Activated CD4-positive, alpha-beta T cell treated with anti-CD3 and anti-CD28 coated beads for 36 hours (primary cell): ENCODE measurements at regions of chr14 and their contacts with region 1.

Region 1: DNA sequence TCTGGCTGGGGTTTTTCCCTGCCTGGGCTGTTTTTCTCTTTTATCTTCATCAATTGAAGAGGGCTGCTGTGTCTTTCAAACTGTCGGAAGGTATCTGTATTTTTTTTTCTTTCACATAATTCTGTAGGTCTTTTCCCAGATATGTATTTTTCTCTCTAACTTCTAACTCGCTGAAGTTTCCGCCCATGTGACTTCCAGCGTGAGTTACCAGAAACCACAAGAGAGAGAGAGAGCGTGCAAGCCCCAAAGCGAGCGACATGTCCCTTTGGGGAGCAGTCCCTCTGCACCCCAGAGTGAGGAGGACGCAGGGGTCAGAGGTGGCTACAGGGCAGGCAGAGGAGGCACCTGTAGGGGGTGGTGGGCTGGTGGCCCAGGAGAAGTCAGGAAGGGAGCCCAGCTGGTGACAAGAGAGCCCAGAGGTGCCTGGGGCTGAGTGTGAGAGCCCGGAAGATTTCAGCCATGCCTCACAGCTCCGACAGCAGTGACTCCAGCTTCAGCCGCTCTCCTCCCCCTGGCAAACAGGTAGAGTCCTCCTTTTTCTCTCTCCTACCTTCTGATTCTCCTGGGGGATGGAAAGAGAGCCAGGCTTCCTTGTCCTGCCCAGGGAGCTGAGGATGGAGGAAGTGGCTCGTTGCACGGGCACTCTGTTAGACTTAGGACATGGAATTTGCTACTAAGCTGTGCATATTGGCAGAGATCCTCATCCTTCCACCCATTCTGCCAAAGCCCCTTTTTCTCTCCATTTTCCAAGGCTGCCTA is at the start of gene BATF:
- DNase-seq: peak; percentile 87
- ATAC-seq: peak; percentile 60
- H3K4me3 Mint-ChIP-seq: peak within 1 kb of the TSS; percentile 100
- H3K27ac Mint-ChIP-seq: peak within 1 kb of the TSS; percentile 100
- H3K4me1 Mint-ChIP-seq: peaks cover 68% of the 10 kb centered on the region
- H3K27me3 Mint-ChIP-seq: no peaks in the 10 kb centered on the region
- total RNA-seq, gene BATF: 165 to 187 TPM

Region 2: GRCh38 chr14:75249251-75249957 is 273.0 kb before region 1 on chr14:
- CTCF ChIA-PET with region 1: no interaction called
- POLR2A ChIA-PET with region 1: no interaction called
- intact Hi-C with region 1: loop called in 1 of 2 experiments (anchors 5 kb)
- DNase-seq: peak; percentile 91
- ATAC-seq: peak; percentile 81
- H3K4me3 Mint-ChIP-seq: peak overlapping the region; percentile 11
- H3K27ac Mint-ChIP-seq: peak overlapping the region; percentile 82
- H3K4me1 Mint-ChIP-seq: peaks cover 57% of the 10 kb centered on the region
- H3K27me3 Mint-ChIP-seq: peaks cover 2% of the 10 kb centered on the region

Region 3: DNA sequence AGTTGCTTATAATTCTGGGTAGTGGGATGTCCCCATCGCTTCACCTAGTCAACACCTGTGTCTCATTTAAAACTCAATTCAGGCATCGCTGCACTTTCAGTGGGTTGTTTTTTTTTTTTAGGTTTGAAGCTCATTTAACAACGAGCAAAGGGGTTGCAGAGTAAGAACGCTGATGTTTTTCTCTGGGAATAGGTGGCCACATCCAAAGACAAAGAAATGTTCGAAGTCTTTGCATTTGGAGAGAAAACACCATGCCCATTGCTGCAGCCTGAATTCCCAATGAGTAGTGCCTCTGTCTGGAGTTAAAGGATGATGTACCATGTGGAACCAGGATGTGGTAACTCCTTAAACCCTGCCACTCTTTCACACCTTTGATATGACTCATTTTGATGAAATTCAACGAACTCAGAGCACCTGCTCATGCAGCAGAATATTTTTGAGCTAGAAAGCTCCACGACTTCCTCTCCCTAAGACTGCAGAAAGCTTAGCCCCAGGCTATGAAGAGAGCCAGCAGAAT is 35.2 kb before region 1 on chr14:
- CTCF ChIA-PET with region 1: interaction called, 25 read pairs
- POLR2A ChIA-PET with region 1: no interaction called
- intact Hi-C with region 1: loop called in 1 of 2 experiments (anchors 2 kb)
- DNase-seq: peak; percentile 24
- ATAC-seq: peak; percentile 89
- H3K4me3 Mint-ChIP-seq: no peak overlapping the region
- H3K27ac Mint-ChIP-seq: no peak overlapping the region
- H3K4me1 Mint-ChIP-seq: peaks cover 32% of the 10 kb centered on the region
- H3K27me3 Mint-ChIP-seq: no peaks in the 10 kb centered on the region

Region 4: GRCh38 chr14:75506930-75507329 is 15.5 kb before region 1 on chr14:
- CTCF ChIA-PET with region 1: interaction called, 27 read pairs
- POLR2A ChIA-PET with region 1: no interaction called
- intact Hi-C with region 1: no loop called
- DNase-seq: no peak
- ATAC-seq: no peak
- H3K4me3 Mint-ChIP-seq: no peak overlapping the region
- H3K27ac Mint-ChIP-seq: no peak overlapping the region
- H3K4me1 Mint-ChIP-seq: peaks cover 23% of the 10 kb centered on the region
- H3K27me3 Mint-ChIP-seq: no peaks in the 10 kb centered on the region

Region 5: GRCh38 chr14:75542588-75543091 is 20.2 kb after region 1 on chr14:
- CTCF ChIA-PET with region 1: interaction called, 16 read pairs
- POLR2A ChIA-PET with region 1: interaction called, 35 read pairs
- intact Hi-C with region 1: loop called (anchors 1 kb)
- DNase-seq: peak; percentile 95
- ATAC-seq: peak; percentile 86
- H3K4me3 Mint-ChIP-seq: peak overlapping the region; percentile 59
- H3K27ac Mint-ChIP-seq: peak overlapping the region; percentile 98
- H3K4me1 Mint-ChIP-seq: peaks cover 85% of the 10 kb centered on the region
- H3K27me3 Mint-ChIP-seq: no peaks in the 10 kb centered on the region

Region 6: GRCh38 chr14:75566321-75566720 is 43.9 kb after region 1 on chr14:
- CTCF ChIA-PET with region 1: interaction called, 25 read pairs
- POLR2A ChIA-PET with region 1: interaction called, 19 read pairs
- intact Hi-C with region 1: loop called (anchors 1 kb)
- DNase-seq: peak; percentile 94
- ATAC-seq: peak; percentile 82
- H3K4me3 Mint-ChIP-seq: peak overlapping the region; percentile 72
- H3K27ac Mint-ChIP-seq: peak overlapping the region; percentile 98
- H3K4me1 Mint-ChIP-seq: peaks cover 86% of the 10 kb centered on the region
- H3K27me3 Mint-ChIP-seq: no peaks in the 10 kb centered on the region